Transverse colon (tissue), 4 donors: ENCODE measurements at regions of chr19 and their contacts with region 1.

Region 1: GRCh38 chr19:10936661-10937084 is 8.1 kb downstream of the TIMM29 start:
- DNase-seq: peak; percentile 40
- H3K4me3 ChIP-seq: no peak overlapping the region
- H3K27ac ChIP-seq: peak overlapping the region; percentile 24 to 58 (median 47)
- H3K4me1 ChIP-seq: peaks cover 0 to 20% (median 8%) of the 10 kb centered on the region in 4 donors
- H3K27me3 ChIP-seq: no peaks in the 10 kb centered on the region
- CTCF ChIP-seq: peak; percentile 60 to 79 (median 64)
- EP300 ChIP-seq: no peak
- POLR2A ChIP-seq: no peak

Region 2: DNA sequence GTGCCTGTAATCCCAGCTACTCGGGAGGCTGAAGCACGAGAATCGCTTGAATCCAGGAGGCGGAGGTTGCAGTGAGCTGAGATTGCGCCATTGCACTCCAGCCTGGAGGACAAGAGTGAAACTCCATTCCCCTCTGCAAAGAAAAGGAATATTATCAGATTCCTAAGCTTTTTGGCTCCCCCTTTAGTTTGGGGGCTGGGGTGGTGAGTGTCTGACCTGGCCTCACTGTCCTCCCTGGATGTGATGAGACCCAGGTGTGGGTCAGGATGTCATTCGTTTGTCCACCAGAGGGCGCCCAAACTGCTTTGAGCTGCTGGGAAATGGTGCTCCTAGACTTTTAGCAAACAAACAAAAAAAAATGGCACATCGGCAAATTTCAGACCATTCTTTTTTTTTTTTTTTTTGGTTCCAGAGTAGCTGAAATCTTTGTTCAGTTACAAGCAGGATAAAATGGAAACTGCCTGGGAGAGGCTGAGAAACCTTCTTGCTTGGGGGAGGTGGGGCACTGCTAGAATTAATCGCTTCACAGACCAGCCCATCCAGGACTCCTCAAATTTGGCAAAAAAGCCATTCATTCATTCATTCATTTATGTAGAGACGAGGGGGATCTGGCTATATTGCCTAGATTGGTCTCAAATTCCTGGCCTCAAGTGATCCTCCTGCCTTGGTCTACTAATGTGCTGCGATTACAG is 189.5 kb after region 1 on chr19:
- in situ Hi-C with region 1: loop called in 1 of 4 experiments (anchors 10 kb)
- intact Hi-C with region 1: no loop called
- DNase-seq: peak; percentile 86
- H3K4me3 ChIP-seq: no peak overlapping the region
- H3K27ac ChIP-seq: no peak overlapping the region
- H3K4me1 ChIP-seq: peaks cover 0 to 7% (median 5%) of the 10 kb centered on the region in 4 donors
- H3K27me3 ChIP-seq: no peaks in the 10 kb centered on the region
- CTCF ChIP-seq: peak; percentile 77 to 85 (median 78)
- EP300 ChIP-seq: no peak
- POLR2A ChIP-seq: no peak